ENCODE measurements at regions of chr1 and their contacts with region 1.

Region 1: GRCh38 chr1:175481126-175482066 is 262.0 kb downstream of the TNR start:
- DNase-seq: peak; percentile 54
- H3K4me3 Mint-ChIP-seq: no peak overlapping the region
- H3K27ac Mint-ChIP-seq: no peak overlapping the region
- H3K4me1 Mint-ChIP-seq: no peaks in the 10 kb centered on the region
- H3K27me3 Mint-ChIP-seq: peaks cover 87% of the 10 kb centered on the region
- CTCF ChIP-seq: peak; percentile 73

Region 2: DNA sequence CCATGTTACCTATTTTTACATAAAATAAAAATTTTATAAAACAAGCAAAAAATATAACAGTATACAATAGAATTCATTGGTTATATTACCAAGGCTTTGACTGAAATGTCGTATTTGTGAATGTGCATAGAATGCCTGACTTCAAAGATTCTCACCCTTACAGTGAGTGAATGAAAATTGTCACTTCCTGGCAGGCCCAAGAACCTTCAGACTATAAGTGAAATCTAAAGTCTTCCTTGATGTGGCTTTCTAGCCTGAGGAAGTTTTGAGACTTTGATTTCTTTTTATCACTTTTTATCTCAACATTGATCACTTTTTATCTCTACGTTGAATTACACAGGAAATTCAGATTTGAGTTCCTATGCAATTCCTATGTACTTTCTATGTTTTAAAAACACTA is 184.1 kb before region 1 on chr1:
- CTCF ChIA-PET with region 1: no interaction called
- POLR2A ChIA-PET with region 1: no interaction called
- intact Hi-C with region 1: no loop called
- DNase-seq: no peak
- H3K4me3 Mint-ChIP-seq: no peak overlapping the region
- H3K27ac Mint-ChIP-seq: no peak overlapping the region
- H3K4me1 Mint-ChIP-seq: no peaks in the 10 kb centered on the region
- H3K27me3 Mint-ChIP-seq: no peaks in the 10 kb centered on the region
- CTCF ChIP-seq: no peak

Region 3: DNA sequence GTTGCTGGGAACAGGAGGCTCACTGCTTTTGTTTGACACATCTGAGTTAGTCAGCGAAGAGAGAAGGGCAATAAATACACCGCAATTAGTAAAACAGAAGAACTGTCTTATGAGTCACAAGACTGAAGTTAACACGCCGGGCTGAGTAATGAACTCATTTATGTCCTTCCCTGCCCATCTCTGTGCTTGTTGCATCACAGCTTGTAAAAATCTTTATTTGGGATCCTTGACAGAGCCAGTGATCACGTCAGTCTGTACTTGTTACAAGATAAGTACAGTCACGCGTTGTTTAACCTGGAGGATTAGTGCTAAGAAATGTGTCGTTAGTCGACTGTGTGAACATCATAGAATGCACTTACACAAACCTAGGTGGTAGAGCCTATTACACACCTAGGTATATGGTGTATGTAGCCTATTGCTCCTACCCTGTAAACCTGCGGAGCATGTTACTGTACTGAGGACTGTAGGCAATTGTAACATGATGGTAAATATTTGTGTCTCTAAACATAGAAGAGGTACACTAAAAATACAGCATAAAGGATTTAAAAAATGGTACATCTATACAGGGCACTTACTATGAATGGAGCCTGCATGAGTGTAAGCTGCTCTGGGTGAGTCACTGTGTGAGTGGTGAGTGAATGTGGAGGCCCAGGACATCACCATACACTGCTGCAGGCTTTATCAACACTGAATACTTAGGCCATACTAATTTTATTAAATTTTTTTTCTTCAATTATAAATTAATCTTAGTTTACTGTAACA is 10.2 kb before region 1 on chr1:
- CTCF ChIA-PET with region 1: interaction called, 18 read pairs
- POLR2A ChIA-PET with region 1: no interaction called
- intact Hi-C with region 1: no loop called
- DNase-seq: peak; percentile 95
- H3K4me3 Mint-ChIP-seq: no peak overlapping the region
- H3K27ac Mint-ChIP-seq: peak overlapping the region; percentile 65
- H3K4me1 Mint-ChIP-seq: peaks cover 30% of the 10 kb centered on the region
- H3K27me3 Mint-ChIP-seq: peaks cover 72% of the 10 kb centered on the region
- CTCF ChIP-seq: no peak

Region 4: DNA sequence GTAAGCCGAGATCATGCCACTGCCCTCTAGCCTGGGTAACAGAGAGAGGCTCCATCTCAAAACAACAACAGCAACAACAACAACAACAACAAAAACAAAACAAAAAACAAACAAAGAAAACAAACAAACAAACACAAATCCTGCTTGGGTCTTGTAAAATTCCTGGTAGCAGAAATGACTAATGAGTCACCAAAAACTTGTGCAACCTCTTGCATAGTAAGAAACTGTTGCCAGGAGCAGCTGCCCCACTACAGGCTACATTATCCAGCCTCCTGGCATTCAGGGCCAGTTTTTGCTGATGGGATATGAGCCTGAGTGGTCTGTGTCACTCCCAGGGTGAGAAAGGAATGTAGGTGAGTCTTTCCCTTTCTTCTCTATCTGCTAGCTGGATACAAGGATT is 16.6 kb after region 1 on chr1:
- CTCF ChIA-PET with region 1: interaction called, 25 read pairs
- POLR2A ChIA-PET with region 1: interaction called, 3 read pairs
- intact Hi-C with region 1: no loop called
- DNase-seq: peak; percentile 81
- H3K4me3 Mint-ChIP-seq: no peak overlapping the region
- H3K27ac Mint-ChIP-seq: peak overlapping the region; percentile 40
- H3K4me1 Mint-ChIP-seq: peaks cover 16% of the 10 kb centered on the region
- H3K27me3 Mint-ChIP-seq: peaks cover 64% of the 10 kb centered on the region
- CTCF ChIP-seq: no peak

Region 5: GRCh38 chr1:175555266-175555665 is 73.9 kb after region 1 on chr1:
- CTCF ChIA-PET with region 1: interaction called, 3 read pairs
- POLR2A ChIA-PET with region 1: no interaction called
- intact Hi-C with region 1: loop called (anchors 5 kb)
- DNase-seq: peak; percentile 51
- H3K4me3 Mint-ChIP-seq: no peak overlapping the region
- H3K27ac Mint-ChIP-seq: peak overlapping the region; percentile 13
- H3K4me1 Mint-ChIP-seq: peaks cover 13% of the 10 kb centered on the region
- H3K27me3 Mint-ChIP-seq: peaks cover under 1% of the 10 kb centered on the region
- CTCF ChIP-seq: no peak

Region 6: DNA sequence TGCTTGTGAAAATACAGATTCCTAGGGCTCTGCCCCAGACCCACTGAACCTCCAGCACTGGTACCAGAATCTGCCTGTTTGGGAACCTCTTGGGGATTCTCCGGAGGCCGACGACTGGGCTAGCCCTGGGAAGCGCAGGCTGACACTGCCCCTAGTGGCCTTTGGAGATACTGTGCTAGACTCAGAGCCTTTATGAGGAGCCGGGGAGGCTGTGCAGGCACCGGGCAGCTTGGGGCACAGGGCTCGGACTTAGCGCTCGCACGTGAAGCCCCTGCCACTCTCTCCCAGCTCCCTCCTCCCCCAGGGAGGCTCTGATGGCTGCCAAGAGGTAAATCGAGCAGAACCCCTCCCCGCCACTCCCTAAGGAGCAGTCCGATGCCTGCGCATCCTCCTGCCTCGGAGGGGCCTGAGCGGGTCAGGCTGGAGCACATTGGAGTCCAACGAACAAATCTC is 406.6 kb after region 1 on chr1:
- CTCF ChIA-PET with region 1: interaction called, 3 read pairs
- POLR2A ChIA-PET with region 1: no interaction called
- intact Hi-C with region 1: loop called (anchors 1 kb)
- DNase-seq: peak; percentile 61
- H3K4me3 Mint-ChIP-seq: no peak overlapping the region
- H3K27ac Mint-ChIP-seq: no peak overlapping the region
- H3K4me1 Mint-ChIP-seq: no peaks in the 10 kb centered on the region
- H3K27me3 Mint-ChIP-seq: no peaks in the 10 kb centered on the region
- CTCF ChIP-seq: peak; percentile 84

Region 7: DNA sequence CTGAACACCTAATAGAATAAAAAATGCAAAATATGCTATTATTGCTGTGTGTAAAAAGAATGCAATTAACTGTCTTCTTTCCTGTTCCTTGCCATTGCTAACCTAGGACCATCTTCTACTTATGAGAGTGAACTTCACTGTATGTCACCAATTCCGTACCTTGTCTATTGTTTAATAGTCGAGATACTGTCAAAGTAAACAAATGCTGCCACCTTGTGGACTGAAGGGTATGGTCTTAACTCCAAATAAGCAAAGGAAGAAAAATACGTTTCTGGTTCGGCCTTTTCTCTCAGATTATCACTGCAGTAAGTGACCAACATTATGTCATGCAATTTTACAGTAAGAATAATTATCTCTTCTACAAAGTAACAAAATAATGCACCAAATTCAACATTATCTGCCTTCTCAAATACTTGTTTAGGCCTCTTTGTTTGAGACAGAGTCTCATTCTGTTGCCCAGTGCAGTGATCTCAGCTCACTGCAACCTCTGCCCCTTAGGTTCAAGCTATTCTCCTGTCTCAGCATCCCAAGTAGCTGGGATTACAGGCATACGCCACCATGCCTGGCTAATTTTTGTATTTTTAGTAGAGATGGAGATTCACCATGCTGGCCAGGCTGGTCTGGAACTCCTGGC is 592.2 kb after region 1 on chr1:
- CTCF ChIA-PET with region 1: interaction called, 12 read pairs
- POLR2A ChIA-PET with region 1: no interaction called
- intact Hi-C with region 1: loop called (anchors 1 kb)
- DNase-seq: peak; percentile 85
- H3K4me3 Mint-ChIP-seq: no peak overlapping the region
- H3K27ac Mint-ChIP-seq: no peak overlapping the region
- H3K4me1 Mint-ChIP-seq: peaks cover 6% of the 10 kb centered on the region
- H3K27me3 Mint-ChIP-seq: no peaks in the 10 kb centered on the region
- CTCF ChIP-seq: peak; percentile 74